OCI-LY7 (cell line): ENCODE measurements at regions of chr20 and their contacts with region 1.

Region 1: DNA sequence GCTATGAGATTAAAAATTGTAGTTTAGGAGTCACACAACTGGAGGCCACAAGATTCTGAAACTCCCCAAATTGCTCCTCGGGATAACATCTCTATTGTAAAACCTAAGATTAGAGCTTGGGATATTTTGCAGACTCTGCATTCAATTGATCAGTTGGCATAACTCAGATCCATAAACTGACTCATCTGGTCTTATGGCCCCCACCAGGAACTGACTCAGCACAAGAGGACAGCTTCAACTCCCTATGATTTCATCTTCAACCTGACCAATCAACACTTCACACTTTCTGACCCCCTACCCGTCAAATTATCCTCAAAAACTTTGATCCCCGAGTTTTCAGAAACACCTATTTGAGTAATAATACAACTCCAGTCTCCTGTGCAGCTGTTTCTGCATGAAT is 257.3 kb downstream of the HAO1 start:
- DNase-seq: no peak
- H3K4me3 ChIP-seq: no peak overlapping the region
- H3K27ac ChIP-seq: no peak overlapping the region
- H3K4me1 ChIP-seq: peaks cover 16% of the 10 kb centered on the region
- CTCF ChIP-seq: no peak

Region 2: DNA sequence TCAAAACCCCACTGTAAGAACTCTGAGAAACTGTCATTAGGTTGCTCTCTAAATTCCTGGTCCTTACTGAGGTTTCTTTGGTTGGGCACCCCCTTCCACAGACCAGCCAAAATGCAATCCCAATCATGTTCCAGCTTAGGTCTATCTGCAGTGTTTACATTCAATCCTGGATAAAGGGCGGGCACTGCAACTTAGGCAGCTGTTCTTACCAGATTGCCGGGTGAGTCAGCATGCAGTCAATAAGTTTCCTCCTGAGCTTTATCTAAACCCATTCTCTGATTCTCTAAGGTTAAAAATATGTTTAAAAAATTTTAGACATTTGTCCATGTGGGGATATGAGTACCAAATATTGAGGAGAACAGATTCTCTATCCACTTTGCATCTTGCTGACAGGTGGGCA is 59.6 kb after region 1 on chr20:
- CTCF ChIA-PET with region 1: no interaction called
- POLR2A ChIA-PET with region 1: no interaction called
- intact Hi-C with region 1: loop called (anchors 10 kb)
- DNase-seq: no peak
- H3K4me3 ChIP-seq: no peak overlapping the region
- H3K27ac ChIP-seq: no peak overlapping the region
- H3K4me1 ChIP-seq: no peaks in the 10 kb centered on the region
- CTCF ChIP-seq: no peak